ENCODE measurements at regions of chr21 and their contacts with region 1.

Region 1: DNA sequence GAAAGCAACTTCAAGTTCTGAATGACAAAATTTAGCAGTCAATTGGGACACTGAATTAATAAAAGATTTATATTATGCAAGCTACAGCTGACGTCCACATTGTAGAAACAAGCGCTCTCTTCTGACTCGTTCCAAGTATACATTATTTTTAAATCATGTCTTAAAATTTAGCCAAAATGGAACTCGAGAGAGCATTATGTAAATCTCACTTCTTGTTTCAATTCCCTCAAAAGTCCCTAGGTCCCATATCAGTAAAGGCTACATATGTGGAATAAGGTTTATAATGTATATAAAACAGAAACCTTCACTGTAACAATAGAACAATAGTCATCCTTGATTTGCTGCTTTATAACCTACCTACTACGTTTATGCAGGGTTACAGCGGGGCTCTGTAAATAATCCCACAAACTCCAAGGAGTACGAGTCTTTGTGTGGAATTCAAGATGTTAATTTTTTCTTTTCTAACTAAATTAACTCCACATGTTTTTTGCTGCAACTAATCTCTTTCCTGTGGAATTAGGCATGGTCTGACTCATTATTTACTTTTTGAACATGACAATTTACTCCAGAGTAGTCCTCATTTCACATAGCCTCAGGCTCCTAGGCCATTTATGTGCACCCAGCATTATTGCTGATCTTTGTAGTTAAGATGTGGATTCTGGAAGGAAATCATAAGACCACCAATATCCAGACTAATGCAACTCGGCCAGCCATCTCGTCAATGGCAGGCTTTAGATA is 785.1 kb downstream of the LTN1 start:
- DNase-seq: no peak
- H3K4me3 ChIP-seq: no peak overlapping the region
- H3K27ac ChIP-seq: no peak overlapping the region
- H3K4me1 ChIP-seq: no peaks in the 10 kb centered on the region
- CTCF ChIP-seq: no peak

Region 2: DNA sequence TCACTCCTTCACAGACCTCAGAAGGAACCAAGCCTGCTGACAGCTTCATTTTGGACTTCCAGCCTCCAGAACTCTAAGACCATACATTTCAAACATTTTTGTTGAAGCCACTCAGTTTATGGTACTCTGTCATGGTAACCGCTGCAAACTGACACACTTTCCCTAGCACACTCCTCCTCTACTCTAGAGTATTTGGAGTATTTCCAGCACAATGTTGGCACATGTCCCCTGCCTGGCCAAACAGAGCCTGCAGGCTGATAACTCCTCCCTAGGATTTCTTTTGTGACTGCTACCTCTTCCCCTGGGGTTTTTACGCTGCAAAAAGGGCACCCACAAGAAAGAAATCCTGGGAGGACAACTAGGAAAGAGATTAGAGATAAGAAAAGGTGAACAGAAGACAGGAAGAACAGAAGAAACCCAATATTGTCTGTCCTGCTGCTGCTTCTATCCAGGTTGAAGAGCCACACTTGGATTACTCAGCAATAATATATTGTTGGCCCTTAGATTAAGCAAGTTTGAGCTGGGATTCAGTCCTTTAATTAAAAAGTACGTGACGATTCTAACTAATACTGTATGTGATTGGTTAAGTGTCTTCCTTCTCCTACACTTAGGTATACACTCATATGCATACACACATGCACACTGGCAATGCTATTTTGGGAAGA is 59.1 kb before region 1 on chr21:
- CTCF ChIA-PET with region 1: no interaction called
- POLR2A ChIA-PET with region 1: no interaction called
- intact Hi-C with region 1: no loop called
- DNase-seq: no peak
- H3K4me3 ChIP-seq: no peak overlapping the region
- H3K27ac ChIP-seq: no peak overlapping the region
- H3K4me1 ChIP-seq: no peaks in the 10 kb centered on the region
- CTCF ChIP-seq: no peak

Region 3: DNA sequence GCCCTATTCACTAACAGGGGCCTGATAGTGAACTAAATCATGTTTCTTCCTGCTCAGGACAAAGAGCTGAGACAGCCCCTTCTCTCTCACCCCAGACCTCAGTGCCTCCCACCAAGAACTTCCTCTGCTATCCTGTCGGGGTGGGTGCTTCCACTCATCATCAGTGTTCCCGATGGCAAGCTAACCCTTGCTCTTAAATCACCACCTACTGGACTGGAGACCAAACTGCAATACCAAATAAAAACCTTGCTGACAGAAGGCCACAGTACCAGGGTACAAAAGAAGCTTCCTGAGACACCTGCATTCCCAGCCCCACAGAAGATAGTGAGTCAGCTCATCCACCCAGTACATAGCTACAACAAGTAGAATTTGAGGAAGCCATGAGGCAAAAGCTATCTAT is 14.4 kb before region 1 on chr21:
- CTCF ChIA-PET with region 1: no interaction called
- POLR2A ChIA-PET with region 1: interaction called, 10 read pairs
- intact Hi-C with region 1: no loop called
- DNase-seq: peak; percentile 2
- H3K4me3 ChIP-seq: no peak overlapping the region
- H3K27ac ChIP-seq: no peak overlapping the region
- H3K4me1 ChIP-seq: no peaks in the 10 kb centered on the region
- CTCF ChIP-seq: 0 out of 2 replicates have a peak, but pooled peaks have one; percentile 34

Region 4: DNA sequence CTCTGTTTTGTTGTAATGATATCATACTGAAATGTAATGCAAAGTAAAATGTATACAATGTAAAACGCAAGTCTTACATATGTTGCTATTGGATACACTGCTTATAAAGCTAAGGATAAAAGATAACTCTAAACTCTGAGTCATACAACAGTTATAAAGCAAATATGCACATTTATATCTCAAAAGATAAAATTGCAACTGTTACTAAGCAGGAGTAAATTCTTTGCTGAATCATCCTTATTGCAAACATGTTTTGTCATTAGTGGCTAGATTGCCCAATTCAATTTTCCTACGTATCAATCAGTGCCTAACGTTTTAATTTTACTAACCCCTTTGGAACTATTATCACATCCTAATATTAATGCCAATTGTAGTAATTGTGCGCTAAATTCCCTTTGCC is 22.2 kb after region 1 on chr21:
- CTCF ChIA-PET with region 1: no interaction called
- POLR2A ChIA-PET with region 1: no interaction called
- intact Hi-C with region 1: no loop called
- DNase-seq: no peak
- H3K4me3 ChIP-seq: no peak overlapping the region
- H3K27ac ChIP-seq: no peak overlapping the region
- H3K4me1 ChIP-seq: no peaks in the 10 kb centered on the region
- CTCF ChIP-seq: no peak

Region 5: DNA sequence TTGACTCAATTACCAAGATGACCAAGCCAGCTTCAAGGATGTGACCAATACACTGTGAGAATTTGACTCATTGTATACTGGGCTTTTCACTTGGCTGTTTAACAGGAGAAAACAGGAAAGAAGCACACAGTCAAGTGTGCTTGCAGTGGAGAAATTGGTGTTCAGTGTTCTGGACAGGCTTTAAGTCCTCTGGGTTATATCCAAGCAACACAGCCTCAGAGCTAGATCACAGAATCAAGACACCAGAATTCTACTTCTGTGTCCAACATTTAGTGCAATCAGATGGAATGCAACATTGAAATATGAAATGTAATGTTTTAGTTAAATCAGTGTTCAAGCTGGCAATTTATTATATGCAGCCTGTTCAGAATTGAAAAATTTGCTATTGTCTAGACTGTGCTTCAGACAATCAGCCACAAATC is 90.7 kb after region 1 on chr21:
- CTCF ChIA-PET with region 1: no interaction called
- POLR2A ChIA-PET with region 1: no interaction called
- intact Hi-C with region 1: no loop called
- DNase-seq: no peak
- H3K4me3 ChIP-seq: no peak overlapping the region
- H3K27ac ChIP-seq: no peak overlapping the region
- H3K4me1 ChIP-seq: no peaks in the 10 kb centered on the region
- CTCF ChIP-seq: no peak